Dorsolateral prefrontal cortex (tissue), 120 donors: ENCODE measurements at regions of chr12 and their contacts with region 1.

Region 1: DNA sequence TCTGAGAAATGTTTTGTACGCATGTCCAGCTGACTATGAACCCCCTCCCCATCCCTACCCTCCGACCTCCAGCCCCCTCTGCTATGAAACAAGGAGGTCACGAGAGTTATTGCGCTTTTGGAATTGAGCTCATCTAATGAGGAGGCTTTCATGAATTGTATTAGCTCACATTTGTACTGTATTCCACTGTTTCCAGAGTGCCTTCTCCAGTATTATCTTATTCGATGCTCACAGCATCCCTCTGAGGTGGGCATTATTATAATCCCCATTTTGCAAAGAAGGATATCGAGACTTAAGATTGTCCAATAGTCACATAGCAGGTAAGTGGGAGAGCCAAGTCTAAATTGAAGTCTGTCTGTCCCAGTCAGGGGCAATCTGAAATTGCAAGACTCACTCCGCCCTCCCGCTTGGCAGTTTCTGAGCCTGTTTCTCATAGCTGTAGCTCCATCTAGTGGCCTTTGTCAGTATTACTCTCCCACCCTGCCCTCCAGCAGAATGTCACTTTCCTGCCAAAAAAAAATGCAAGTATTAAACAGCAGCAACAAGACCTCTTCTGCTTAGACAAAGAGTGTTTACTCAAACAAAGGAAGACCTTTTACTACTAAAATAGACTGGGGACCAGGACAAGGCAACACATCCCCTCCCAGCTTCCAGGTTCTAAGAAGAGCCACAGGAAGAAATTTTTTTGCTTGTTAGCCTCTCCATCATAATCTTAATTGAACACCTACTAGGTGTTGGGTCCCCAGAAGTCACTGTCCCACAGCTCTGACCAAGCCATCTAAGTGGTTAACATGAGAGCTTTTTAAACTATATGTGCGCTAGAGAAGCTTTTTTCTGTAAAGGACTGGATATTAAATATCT is 48.6 kb upstream of the TMEM233 start:
- DNase-seq: peak; percentile 22 to 71 (median 55)
- H3K4me3 ChIP-seq: no peak overlapping the region
- H3K27ac ChIP-seq: no peak overlapping the region
- H3K27me3 ChIP-seq: peaks cover 0 to 18% (median 0%) of the 10 kb centered on the region in 45 donors
- CTCF ChIP-seq: peak; percentile 74 to 97 (median 89)

Region 2: DNA sequence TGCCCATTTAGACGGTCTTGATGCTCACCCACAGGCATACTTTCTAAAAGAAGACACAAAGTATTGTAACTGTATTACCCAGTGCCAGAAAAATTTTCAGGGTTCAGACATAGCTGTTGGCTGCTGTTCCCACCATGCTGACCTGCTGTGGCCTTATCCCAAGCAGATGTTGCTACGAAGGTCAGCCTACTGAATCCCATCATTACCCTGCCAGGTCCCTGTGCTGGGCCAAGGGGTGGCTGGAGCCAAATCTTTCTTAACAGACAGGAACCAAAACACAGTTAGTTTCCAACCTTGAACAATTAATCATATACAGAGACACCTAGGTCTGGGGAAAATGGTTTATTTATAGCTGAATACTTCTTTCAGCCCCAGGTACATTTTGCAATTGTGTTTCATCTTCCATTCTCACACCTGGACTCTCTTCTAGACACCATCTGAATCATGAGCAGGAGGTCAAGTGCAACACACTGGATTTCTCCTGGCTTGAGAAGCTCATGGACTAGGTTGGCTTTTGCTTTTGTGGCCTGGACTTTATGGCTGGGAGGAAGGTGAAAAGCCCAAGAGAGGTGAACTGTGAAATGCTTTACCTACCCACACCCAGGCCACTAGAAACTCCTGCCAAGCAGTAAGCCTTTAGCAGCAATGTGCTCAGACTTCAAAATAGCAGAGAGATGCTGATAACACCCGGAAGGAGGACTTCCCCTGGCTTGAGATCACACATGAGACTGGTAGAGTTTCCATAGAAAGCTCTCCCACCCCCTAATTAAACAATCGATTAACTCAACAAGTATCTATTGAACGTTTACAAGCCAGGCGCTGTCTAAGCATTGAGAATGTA is 1018.5 kb before region 1 on chr12:
- intact Hi-C with region 1: no loop called
- DNase-seq: no peak
- H3K4me3 ChIP-seq: no peak overlapping the region
- H3K27ac ChIP-seq: no peak overlapping the region
- H3K27me3 ChIP-seq: peaks cover 0 to 2% (median 0%) of the 10 kb centered on the region in 45 donors
- CTCF ChIP-seq: no peak

Region 3: DNA sequence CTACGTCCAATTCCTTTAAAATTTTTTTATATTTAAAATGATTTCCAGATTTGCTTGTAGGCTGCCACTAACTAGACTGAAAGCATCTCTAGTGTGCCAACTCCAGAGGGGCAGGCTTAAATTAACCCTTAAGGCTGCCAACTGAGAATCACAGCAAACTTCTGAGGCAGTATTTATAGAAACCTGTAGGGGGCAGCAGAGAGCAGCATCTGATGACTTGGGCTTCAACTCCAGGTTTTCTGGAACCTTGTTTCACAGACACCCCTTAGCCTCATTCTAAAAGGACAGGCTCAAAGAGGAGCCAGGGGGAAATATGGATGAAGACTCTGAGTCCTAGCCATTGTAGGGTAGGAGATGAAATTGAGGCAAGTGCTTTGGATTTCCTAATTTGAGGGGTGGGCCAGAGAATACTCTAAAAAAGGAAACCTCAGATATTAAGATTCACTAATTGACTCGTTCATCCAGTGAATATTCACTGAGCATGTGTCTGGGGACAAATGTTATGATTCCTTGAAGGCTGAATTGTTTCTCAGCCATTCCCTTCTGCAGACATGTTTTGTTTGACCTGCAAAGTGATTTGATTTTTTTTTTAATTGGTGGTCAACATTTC is 429.6 kb before region 1 on chr12:
- intact Hi-C with region 1: loop called in 1 of 2 experiments (anchors 10 kb)
- DNase-seq: peak in 2 of 10 donors; percentile 39 to 40
- H3K4me3 ChIP-seq: no peak overlapping the region
- H3K27ac ChIP-seq: no peak overlapping the region
- H3K27me3 ChIP-seq: no peaks in the 10 kb centered on the region
- CTCF ChIP-seq: peak; percentile 74 to 99 (median 91)

Region 4: GRCh38 chr12:119444456-119445044 is 100.4 kb before region 1 on chr12:
- intact Hi-C with region 1: loop called (anchors 10 kb)
- DNase-seq: peak in 7 of 10 donors; percentile 10 to 61 (median 47)
- H3K4me3 ChIP-seq: no peak overlapping the region
- H3K27ac ChIP-seq: no peak overlapping the region
- H3K27me3 ChIP-seq: peaks cover 0 to 56% (median 0%) of the 10 kb centered on the region in 45 donors
- CTCF ChIP-seq: peak; percentile 66 to 91 (median 80)